MCF 10A (cell line): ENCODE measurements at regions of chr10 and their contacts with region 1.

Region 1: GRCh38 chr10:48910548-48910947 is 29.1 kb downstream of the LRRC18 start:
- DNase-seq: no peak
- H3K4me3 Mint-ChIP-seq: no peak overlapping the region
- H3K27ac Mint-ChIP-seq: no peak overlapping the region
- H3K4me1 Mint-ChIP-seq: no peaks in the 10 kb centered on the region
- H3K27me3 Mint-ChIP-seq: peaks cover 77% of the 10 kb centered on the region
- CTCF ChIP-seq: no peak

Region 2: GRCh38 chr10:48856855-48857254 is 53.7 kb before region 1 on chr10:
- CTCF ChIA-PET with region 1: no interaction called
- POLR2A ChIA-PET with region 1: no interaction called
- intact Hi-C with region 1: loop called (anchors 5 kb)
- DNase-seq: no peak
- H3K4me3 Mint-ChIP-seq: no peak overlapping the region
- H3K27ac Mint-ChIP-seq: no peak overlapping the region
- H3K4me1 Mint-ChIP-seq: no peaks in the 10 kb centered on the region
- H3K27me3 Mint-ChIP-seq: peaks cover 75% of the 10 kb centered on the region
- CTCF ChIP-seq: no peak

Region 3: GRCh38 chr10:48981310-48981907 is 70.9 kb after region 1 on chr10:
- CTCF ChIA-PET with region 1: no interaction called
- POLR2A ChIA-PET with region 1: no interaction called
- intact Hi-C with region 1: no loop called
- DNase-seq: peak; percentile 63
- H3K4me3 Mint-ChIP-seq: no peak overlapping the region
- H3K27ac Mint-ChIP-seq: no peak overlapping the region
- H3K4me1 Mint-ChIP-seq: no peaks in the 10 kb centered on the region
- H3K27me3 Mint-ChIP-seq: no peaks in the 10 kb centered on the region
- CTCF ChIP-seq: peak; percentile 73

Region 4: GRCh38 chr10:49272251-49273081 is 361.9 kb after region 1 on chr10:
- CTCF ChIA-PET with region 1: no interaction called
- POLR2A ChIA-PET with region 1: no interaction called
- intact Hi-C with region 1: no loop called
- DNase-seq: no peak
- H3K4me3 Mint-ChIP-seq: no peak overlapping the region
- H3K27ac Mint-ChIP-seq: no peak overlapping the region
- H3K4me1 Mint-ChIP-seq: no peaks in the 10 kb centered on the region
- H3K27me3 Mint-ChIP-seq: peaks cover 34% of the 10 kb centered on the region
- CTCF ChIP-seq: no peak